MCF 10A (cell line): ENCODE measurements at regions of chr6 and their contacts with region 1.

Region 1: GRCh38 chr6:32742374-32742773 is 1.2 kb downstream of the HLA-DQA2 start:
- DNase-seq: no peak
- H3K4me3 Mint-ChIP-seq: no peak overlapping the region
- H3K27ac Mint-ChIP-seq: no peak overlapping the region
- H3K4me1 Mint-ChIP-seq: no peaks in the 10 kb centered on the region
- H3K27me3 Mint-ChIP-seq: peaks cover 90% of the 10 kb centered on the region
- CTCF ChIP-seq: no peak

Region 2: DNA sequence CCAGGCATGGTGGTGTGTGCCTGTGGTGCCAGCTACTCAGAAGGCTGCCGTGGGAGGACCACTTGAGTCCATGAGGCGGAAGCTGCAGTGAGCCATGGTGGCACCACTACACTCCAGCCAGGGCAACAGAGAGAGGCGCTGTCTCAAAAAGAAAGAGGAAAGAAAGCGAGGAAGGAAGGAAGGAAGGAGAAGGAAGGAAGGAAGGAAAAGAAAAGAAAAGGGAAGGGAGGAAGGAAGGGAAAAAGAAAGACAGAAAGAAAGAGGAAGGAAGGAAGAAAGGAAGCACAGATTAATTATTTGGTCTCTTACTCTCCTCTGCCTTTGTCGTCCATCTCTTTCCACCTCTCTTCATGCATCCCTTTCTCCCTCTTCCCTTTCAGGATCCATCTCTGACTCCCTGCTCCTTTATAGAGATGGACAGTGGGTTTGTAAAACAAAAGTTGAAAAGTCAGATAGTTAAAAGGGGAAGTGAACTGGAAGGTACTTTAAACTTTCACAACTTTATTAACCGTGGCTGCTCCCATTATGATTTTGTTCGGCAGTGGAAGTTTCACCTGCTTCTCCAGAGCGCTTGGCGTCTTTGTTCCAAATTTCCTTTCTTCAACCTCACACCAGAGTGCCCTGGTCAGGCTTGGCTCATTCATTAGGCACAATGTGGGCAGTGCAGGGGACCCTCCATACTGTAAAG is 103.7 kb before region 1 on chr6:
- CTCF ChIA-PET with region 1: no interaction called
- POLR2A ChIA-PET with region 1: no interaction called
- intact Hi-C with region 1: loop called (anchors 2 kb)
- DNase-seq: no peak
- H3K4me3 Mint-ChIP-seq: no peak overlapping the region
- H3K27ac Mint-ChIP-seq: no peak overlapping the region
- H3K4me1 Mint-ChIP-seq: no peaks in the 10 kb centered on the region
- H3K27me3 Mint-ChIP-seq: peaks cover 97% of the 10 kb centered on the region
- CTCF ChIP-seq: no peak